Left ventricle myocardium inferior (tissue), 1 donor: ENCODE measurements at regions of chr2 and their contacts with region 1.

Region 1: DNA sequence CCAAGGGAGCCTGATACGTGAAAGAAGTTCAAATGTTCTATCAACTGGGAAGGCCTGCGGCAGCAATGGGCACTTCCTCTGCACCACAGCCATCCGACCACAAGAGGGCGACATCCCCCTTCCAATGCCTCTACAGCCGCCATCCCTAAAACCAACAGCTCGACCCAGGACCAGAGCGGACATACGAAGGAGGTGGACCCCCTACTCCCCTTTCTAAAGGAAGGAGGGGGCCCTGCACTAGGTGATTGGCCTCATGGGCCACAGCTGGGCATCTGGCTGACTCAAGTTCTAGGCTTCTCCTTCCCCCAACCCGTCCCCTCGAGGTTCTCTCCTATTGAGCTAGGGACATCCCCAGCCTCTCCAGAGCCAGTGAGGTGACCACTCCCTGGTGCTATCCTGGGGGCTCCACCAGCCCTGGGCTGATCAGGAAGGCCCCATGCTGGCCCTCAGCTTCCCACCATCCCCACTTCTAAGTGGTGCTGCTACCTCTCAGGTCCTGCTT is 217.2 kb downstream of the TNS1 start:
- DNase-seq: peak; percentile 82
- H3K4me3 ChIP-seq: no peak overlapping the region
- H3K27ac ChIP-seq: no peak overlapping the region
- H3K4me1 ChIP-seq: peaks cover 20% of the 10 kb centered on the region
- H3K27me3 ChIP-seq: no peaks in the 10 kb centered on the region
- CTCF ChIP-seq: peak; percentile 96

Region 2: GRCh38 chr2:217886720-217887309 is 101.2 kb after region 1 on chr2:
- intact Hi-C with region 1: loop called (anchors 5 kb)
- DNase-seq: peak; percentile 65
- H3K4me3 ChIP-seq: no peak overlapping the region
- H3K27ac ChIP-seq: peak overlapping the region; percentile 78
- H3K4me1 ChIP-seq: peaks cover 75% of the 10 kb centered on the region
- H3K27me3 ChIP-seq: no peaks in the 10 kb centered on the region
- CTCF ChIP-seq: peak; percentile 85

Region 3: GRCh38 chr2:217988014-217988839 is 202.6 kb after region 1 on chr2:
- intact Hi-C with region 1: loop called (anchors 2 kb)
- DNase-seq: peak; percentile 88
- H3K4me3 ChIP-seq: peak overlapping the region; percentile 43
- H3K27ac ChIP-seq: peak overlapping the region; percentile 84
- H3K4me1 ChIP-seq: peaks cover 54% of the 10 kb centered on the region
- H3K27me3 ChIP-seq: no peaks in the 10 kb centered on the region
- CTCF ChIP-seq: peak; percentile 88

Region 4: DNA sequence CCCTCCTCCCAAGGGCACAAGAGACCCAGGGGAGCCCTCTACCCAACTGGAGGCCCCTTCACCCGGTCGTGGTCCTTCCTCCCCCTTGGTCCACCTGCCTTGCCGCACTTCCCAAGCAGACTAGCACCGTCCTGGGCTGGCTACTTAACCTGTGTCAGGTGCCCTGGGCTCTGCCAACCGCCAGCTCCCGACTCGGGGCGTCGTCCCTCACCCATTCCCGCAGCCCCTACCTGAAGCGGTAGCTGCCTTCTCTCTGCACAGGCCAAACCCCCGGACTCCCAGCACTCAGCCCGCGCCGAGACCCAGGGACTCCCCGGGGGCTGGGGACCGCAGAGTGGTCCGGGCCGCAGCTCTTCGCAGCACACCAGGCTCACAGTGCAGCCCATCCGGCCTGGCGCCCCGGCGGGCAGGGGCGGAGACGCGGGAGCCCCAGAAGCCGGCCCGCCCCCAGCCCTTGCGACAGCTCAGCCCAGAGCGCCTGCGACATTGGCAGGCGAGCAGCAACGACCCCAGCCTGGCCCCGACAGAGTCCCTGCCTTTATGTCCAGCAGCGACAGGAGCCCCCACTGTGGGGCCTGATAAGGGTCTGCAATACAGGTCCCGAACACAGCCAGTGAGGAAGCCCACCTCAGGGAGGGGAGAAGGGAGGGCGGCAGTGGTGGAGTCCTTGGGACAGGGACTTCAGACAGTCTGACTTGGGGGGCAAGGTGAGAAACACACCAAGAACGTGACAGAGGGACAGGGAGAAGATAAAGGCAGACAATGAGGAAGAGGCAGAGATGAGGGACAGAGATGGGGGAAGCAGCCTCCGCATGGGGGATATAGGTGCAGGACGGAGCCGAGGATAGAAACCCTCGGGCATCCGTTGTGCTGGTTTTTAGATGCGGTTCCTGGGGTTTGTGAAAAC is 248.2 kb after region 1 on chr2:
- intact Hi-C with region 1: loop called (anchors 10 kb)
- DNase-seq: no peak
- H3K4me3 ChIP-seq: peak overlapping the region; percentile 50
- H3K27ac ChIP-seq: no peak overlapping the region
- H3K4me1 ChIP-seq: peaks cover 35% of the 10 kb centered on the region
- H3K27me3 ChIP-seq: peaks cover 17% of the 10 kb centered on the region
- CTCF ChIP-seq: no peak

Region 5: GRCh38 chr2:218166791-218167190 is 381.2 kb after region 1 on chr2 and contains the start of gene CXCR1:
- intact Hi-C with region 1: no loop called
- DNase-seq: no peak
- H3K4me3 ChIP-seq: no peak within 1 kb of the TSS
- H3K27ac ChIP-seq: no peak within 1 kb of the TSS
- H3K4me1 ChIP-seq: no peaks in the 10 kb centered on the region
- H3K27me3 ChIP-seq: peaks cover 49% of the 10 kb centered on the region
- CTCF ChIP-seq: no peak
- total RNA-seq, gene CXCR1: 0.44 TPM